Endothelial cell of umbilical vein (primary cell): ENCODE measurements at regions of chr1 and their contacts with region 1.

Region 1: GRCh38 chr1:233197940-233198339 is 97.6 kb downstream of the PCNX2 start:
- DNase-seq: no peak
- H3K4me3 ChIP-seq: no peak overlapping the region
- H3K27ac ChIP-seq: no peak overlapping the region
- H3K4me1 ChIP-seq: peaks cover 7% of the 10 kb centered on the region
- H3K27me3 ChIP-seq: no peaks in the 10 kb centered on the region
- CTCF ChIP-seq: no peak
- POLR2A ChIP-seq: no peak

Region 2: GRCh38 chr1:231407547-231408396 is 1790.2 kb before region 1 on chr1:
- CTCF ChIA-PET with region 1: no interaction called
- POLR2A ChIA-PET with region 1: no interaction called
- dilution Hi-C with region 1: no loop called
- intact Hi-C with region 1: no loop called
- DNase-seq: peak; percentile 75
- H3K4me3 ChIP-seq: no peak overlapping the region
- H3K27ac ChIP-seq: peak overlapping the region; percentile 45
- H3K4me1 ChIP-seq: peaks cover 20% of the 10 kb centered on the region
- H3K27me3 ChIP-seq: no peaks in the 10 kb centered on the region
- CTCF ChIP-seq: no peak
- POLR2A ChIP-seq: no peak

Region 3: GRCh38 chr1:232962771-232963745 is 234.9 kb before region 1 on chr1:
- CTCF ChIA-PET with region 1: no interaction called
- POLR2A ChIA-PET with region 1: no interaction called
- dilution Hi-C with region 1: no loop called
- intact Hi-C with region 1: loop called (anchors 5 kb)
- DNase-seq: peak; percentile 93
- H3K4me3 ChIP-seq: peak overlapping the region in 1 of 3 experiments; percentile 3
- H3K27ac ChIP-seq: peak overlapping the region; percentile 59
- H3K4me1 ChIP-seq: peaks cover 23% of the 10 kb centered on the region
- H3K27me3 ChIP-seq: no peaks in the 10 kb centered on the region
- CTCF ChIP-seq: no peak
- POLR2A ChIP-seq: no peak